Astrocyte of the cerebellum (primary cell): ENCODE measurements at regions of chr15 and their contacts with region 1.

Region 1: DNA sequence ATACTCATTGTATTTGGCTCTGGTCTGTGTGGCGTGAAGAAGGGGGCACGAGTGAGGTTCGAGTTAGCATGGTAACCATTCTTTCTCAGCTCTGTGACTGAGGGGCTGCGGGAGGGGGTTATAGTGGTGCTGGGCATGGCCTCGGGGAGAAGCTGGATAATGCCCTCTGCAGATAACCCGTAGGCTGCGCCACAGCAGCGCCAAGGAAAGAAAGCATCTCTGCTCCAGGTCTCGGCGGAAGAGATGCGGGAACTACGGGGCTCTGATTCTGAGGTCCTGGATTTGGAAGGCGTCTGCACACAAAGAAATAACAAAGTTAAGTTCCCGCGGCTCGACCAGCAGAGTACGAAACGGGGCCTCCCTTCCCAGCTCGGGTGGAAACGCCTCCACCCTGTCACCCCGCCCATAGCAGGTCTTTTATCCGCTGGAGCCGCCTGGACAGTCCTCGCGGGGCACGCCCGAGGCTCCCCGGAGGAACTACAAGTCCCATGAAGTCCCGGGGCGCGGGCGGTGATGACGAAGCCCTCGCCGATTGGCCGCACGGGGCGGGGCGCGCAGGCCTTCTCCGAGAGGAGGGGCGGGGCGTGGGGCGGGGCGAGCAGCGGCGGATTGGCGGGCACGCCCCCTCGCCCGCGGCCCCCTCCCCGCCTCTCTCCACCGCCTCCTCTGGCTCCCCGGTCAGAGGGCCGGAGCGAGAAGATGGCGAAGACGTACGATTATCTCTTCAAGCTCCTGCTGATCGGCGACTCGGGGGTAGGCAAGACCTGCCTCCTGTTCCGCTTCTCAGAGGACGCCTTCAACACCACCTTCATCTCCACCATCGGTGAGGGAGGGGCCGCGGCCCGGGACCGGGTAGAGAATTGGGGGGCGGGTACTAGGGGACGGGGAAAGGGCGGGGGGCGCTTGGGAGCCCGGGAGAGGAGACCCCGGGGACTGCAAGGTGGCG is at the start of gene RAB8B:
- DNase-seq: peak; percentile 86
- H3K4me3 ChIP-seq: peak within 1 kb of the TSS; percentile 79
- CTCF ChIP-seq: peak; percentile 3

Region 2: GRCh38 chr15:63256433-63257274 is 67.5 kb after region 1 on chr15:
- in situ Hi-C with region 1: loop called (anchors 5 kb)
- DNase-seq: peak; percentile 89
- H3K4me3 ChIP-seq: no peak overlapping the region
- CTCF ChIP-seq: no peak